Right cardiac atrium (tissue), 5 donors: ENCODE measurements at regions of chr3 and their contacts with region 1.

Region 1: GRCh38 chr3:39180546-39181346 is 11.6 kb downstream of the XIRP1 start:
- DNase-seq: peak; percentile 96 to 98 (median 98)
- ATAC-seq: peak; percentile 83 to 90
- H3K4me3 ChIP-seq: peak overlapping the region; percentile 3
- H3K27ac ChIP-seq: peak overlapping the region; percentile 83
- H3K4me1 ChIP-seq: peaks cover 14% of the 10 kb centered on the region
- H3K27me3 ChIP-seq: no peaks in the 10 kb centered on the region

Region 2: GRCh38 chr3:39126532-39127071 is 54.1 kb before region 1 on chr3:
- intact Hi-C with region 1: loop called in 2 of 4 experiments (anchors 5 to 10 kb)
- DNase-seq: peak in 2 of 3 donors; percentile 75 to 81
- ATAC-seq: peak; percentile 70 to 84
- H3K4me3 ChIP-seq: no peak overlapping the region
- H3K27ac ChIP-seq: no peak overlapping the region
- H3K4me1 ChIP-seq: no peaks in the 10 kb centered on the region
- H3K27me3 ChIP-seq: no peaks in the 10 kb centered on the region

Region 3: DNA sequence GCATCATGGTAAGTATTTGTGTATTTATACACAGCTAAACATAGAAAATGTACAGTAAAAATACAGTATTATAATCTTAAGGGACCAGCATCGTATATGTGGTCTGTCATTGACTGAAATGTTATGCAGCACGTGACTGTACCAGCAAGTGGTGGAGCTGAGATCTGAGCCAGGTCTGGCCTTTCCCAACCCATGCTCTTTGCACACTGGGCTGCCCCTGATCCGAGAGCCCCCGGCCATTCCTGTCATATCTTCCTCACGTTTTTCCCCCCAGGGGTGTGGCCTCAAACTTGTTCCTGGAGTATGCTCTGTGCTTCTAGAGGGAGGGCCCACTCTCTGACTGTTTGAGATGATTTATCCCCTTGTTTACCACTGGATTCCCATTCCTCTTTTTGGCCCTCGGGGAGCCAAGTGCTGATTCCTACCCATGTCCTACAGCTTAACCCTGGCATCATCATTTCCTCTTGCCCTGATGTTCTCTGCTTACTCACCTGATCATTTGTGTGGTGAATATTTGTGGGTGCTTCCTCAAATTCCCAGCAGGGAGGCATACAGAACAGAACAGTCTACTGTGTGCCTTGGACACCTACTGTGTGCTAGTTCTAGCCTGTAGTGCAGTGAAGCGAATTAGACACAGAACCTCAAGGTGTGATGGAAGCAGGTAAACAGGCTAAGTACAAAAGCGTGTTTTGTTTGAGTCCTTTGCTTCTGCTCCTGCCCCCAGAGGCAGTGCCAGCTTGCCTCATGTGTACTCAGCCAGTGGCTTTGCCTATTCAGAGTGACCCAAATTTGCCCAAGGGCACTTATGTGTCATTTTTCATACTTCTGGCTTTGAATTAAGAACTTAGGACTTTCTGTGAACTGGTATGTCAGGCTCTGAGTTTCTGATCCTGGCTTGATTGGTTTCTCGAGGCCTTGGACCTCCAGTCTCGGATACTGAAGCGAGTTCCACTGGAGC is 48.3 kb before region 1 on chr3:
- intact Hi-C with region 1: loop called in 2 of 4 experiments (anchors 5 to 10 kb)
- DNase-seq: no peak
- ATAC-seq: no peak
- H3K4me3 ChIP-seq: no peak overlapping the region
- H3K27ac ChIP-seq: no peak overlapping the region
- H3K4me1 ChIP-seq: peaks cover 17% of the 10 kb centered on the region
- H3K27me3 ChIP-seq: no peaks in the 10 kb centered on the region

Region 4: GRCh38 chr3:39146984-39147591 is 33.7 kb before region 1 on chr3:
- intact Hi-C with region 1: loop called in 1 of 4 experiments (anchors 5 kb)
- DNase-seq: peak; percentile 85 to 86 (median 85)
- ATAC-seq: peak; percentile 40 to 63
- H3K4me3 ChIP-seq: peak overlapping the region; percentile 8
- H3K27ac ChIP-seq: peak overlapping the region; percentile 62
- H3K4me1 ChIP-seq: peaks cover 39% of the 10 kb centered on the region
- H3K27me3 ChIP-seq: no peaks in the 10 kb centered on the region